Mucosa of descending colon (tissue), 3 donors: ENCODE measurements at regions of chr19 and their contacts with region 1.

Region 1: DNA sequence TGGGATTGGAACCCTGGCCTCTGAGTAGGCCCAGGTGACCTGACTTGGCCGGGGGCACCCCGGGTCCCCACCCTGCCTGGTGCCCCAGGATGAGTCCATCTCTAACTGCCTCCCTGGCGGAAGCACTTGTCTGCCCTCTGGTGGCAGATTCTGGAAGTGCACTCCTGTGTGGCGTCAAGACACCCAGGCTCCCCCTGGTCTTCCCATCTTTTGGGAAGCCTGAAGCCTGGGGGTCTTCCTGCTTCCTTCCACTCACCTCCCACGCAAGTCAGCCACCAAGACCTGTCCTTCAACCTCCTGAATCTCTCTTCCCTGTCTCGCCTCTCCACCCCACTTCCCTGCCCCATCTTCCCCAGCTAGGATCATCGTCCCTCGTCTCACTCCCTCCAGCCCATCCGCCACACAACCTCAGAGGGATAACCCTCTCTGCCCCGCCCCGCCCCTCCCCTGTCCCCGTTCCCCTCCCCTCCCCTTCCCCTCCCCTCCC is 7.4 kb downstream of the RABAC1 start:
- DNase-seq: peak; percentile 78 to 92 (median 90)
- ATAC-seq: peak; percentile 82
- H3K4me3 ChIP-seq: no peak overlapping the region
- H3K4me1 ChIP-seq: peaks cover 7% of the 10 kb centered on the region
- CTCF ChIP-seq: peak; percentile 99

Region 2: GRCh38 chr19:41872775-41873647 is 78.7 kb before region 1 on chr19:
- intact Hi-C with region 1: loop called (anchors 5 kb)
- DNase-seq: peak; percentile 85 to 92 (median 92)
- ATAC-seq: peak; percentile 78
- H3K4me3 ChIP-seq: no peak overlapping the region
- H3K4me1 ChIP-seq: peaks cover 30% of the 10 kb centered on the region
- CTCF ChIP-seq: peak; percentile 80

Region 3: GRCh38 chr19:41893899-41894298 is 57.8 kb before region 1 on chr19:
- intact Hi-C with region 1: no loop called
- DNase-seq: no peak
- ATAC-seq: peak; percentile 51
- H3K4me3 ChIP-seq: no peak overlapping the region
- H3K4me1 ChIP-seq: no peaks in the 10 kb centered on the region
- CTCF ChIP-seq: no peak